ENCODE measurements at regions of chr12 and their contacts with region 1.

Region 1: DNA sequence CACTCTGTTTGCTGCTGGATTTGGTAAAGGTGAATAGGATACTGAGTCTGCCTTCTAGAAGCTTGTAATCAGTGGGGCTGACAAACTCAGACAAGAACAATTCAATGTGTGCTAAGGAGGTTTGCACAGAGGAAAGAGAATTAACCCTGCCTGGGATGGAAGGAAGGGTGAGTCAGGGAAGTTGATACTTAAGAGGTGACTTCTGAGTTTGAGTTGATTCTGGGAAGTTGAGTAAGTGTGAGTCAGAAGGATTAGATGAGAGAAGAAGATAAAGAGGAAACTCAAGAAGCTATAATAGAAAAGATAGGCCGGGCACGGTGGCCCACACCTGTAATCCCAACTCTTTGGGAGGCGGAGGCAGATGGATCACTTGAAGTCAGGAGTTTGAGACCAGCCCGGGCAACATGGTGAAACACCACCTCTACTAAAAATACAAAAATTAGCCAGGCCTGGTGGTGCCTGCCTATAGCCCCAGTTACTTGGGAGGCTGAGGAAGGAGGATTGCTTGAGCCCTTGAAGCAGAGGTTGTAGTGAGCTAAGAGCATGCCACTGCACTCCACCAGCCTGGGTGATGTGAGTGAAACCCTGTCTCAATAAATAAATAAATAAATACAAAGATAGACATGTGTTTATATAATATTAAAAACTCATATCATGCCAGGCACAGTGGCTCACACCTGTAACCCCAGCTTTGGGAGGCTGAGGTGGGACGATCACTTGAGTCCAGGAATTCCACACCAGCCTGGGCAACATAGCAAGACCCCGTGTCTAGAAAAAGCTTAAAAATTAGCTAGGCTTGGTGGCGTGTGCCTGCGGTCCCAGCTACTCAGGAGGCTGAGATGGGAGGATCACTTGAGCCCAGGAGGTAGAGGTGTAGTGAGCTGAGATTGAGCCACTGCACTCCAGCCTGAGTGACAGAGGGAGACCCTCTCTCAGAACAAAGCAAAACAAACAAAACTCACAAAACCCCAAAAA is 126.8 kb upstream of the CPM start:
- DNase-seq: no peak
- ATAC-seq: no peak
- H3K4me3 ChIP-seq: no peak overlapping the region
- H3K27ac ChIP-seq: peak overlapping the region in 1 of 10 donors; percentile 12
- H3K4me1 ChIP-seq: peaks cover 0 to 56% (median 0%) of the 10 kb centered on the region in 9 donors
- H3K27me3 ChIP-seq: peaks cover 0 to 3% (median 0%) of the 10 kb centered on the region in 7 donors
- CTCF ChIP-seq: no peak

Region 2: DNA sequence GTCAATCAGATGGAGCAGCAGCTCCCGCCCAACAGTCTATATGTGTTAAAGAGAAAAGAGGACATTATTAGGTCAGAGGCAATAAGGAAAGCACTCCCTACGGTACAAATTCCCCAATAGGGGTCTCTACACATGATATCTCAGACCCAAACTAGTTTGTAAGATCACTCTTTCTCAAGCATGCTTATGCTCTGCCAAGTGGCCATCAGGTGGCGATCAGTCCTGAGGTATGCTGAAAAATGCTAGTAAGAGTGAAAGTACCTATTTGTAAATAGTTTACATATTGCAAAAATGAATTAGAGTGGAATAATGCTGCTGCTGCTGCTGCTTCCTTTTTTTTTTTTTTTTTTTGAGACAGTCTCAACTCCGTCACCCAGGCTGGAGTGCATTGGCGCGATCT is 187.8 kb before region 1 on chr12:
- intact Hi-C with region 1: loop called in 1 of 10 experiments (anchors 10 kb)
- DNase-seq: no peak
- ATAC-seq: no peak
- H3K4me3 ChIP-seq: no peak overlapping the region
- H3K27ac ChIP-seq: no peak overlapping the region
- H3K4me1 ChIP-seq: peaks cover 0 to 9% (median 0%) of the 10 kb centered on the region in 9 donors
- H3K27me3 ChIP-seq: peaks cover 0 to 3% (median 0%) of the 10 kb centered on the region in 7 donors
- CTCF ChIP-seq: peak in 2 of 9 donors; percentile 4 to 12